ENCODE measurements at regions of chr7 and their contacts with region 1.

Region 1: DNA sequence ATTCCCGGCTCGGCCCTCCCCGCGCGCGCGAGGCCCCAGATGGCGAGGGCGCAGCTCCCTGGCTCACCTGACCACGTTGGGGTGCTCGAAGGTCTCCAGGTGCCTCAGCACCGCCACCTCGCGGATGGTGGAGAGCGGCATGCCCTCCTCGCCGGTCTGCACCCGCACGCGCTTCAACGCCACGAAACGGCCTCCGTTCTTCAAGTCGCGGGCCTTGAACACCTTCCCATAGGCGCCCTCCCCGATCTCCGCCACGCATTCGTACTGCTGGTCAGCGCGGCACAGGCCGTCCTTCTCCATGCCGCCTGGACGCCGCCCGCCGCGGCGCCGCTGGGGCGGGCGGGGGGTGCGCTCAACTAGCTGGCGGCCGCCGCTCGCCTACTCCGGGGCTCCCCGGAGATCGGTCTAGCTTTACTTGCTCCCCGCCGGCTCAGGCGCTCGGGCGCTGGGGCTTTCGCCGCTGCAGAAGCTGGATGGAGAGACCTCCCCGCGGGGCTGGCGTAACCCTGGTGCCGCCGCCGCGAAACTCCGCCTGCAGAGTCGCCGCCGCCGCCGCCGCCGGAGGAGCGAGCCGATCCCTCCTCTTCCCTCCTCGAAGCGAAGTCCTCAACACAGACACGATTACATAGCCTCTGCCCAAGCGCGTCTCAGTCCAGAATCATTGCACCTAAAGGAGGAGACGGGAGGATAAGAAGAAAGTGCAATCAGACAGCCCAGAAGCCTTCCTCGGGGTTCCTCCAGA is 3.2 kb downstream of the CDK6 start:
- DNase-seq: peak; percentile 91
- H3K4me3 Mint-ChIP-seq: peak overlapping the region; percentile 79
- H3K27ac Mint-ChIP-seq: peak overlapping the region; percentile 92
- H3K4me1 Mint-ChIP-seq: peaks cover 45% of the 10 kb centered on the region
- H3K27me3 Mint-ChIP-seq: peaks cover 13% of the 10 kb centered on the region

Region 2: GRCh38 chr7:92609921-92610518 is 223.2 kb before region 1 on chr7:
- CTCF ChIA-PET with region 1: interaction called, 25 read pairs
- POLR2A ChIA-PET with region 1: no interaction called
- DNase-seq: no peak
- H3K4me3 Mint-ChIP-seq: no peak overlapping the region
- H3K27ac Mint-ChIP-seq: peak overlapping the region; percentile 54
- H3K4me1 Mint-ChIP-seq: peaks cover 26% of the 10 kb centered on the region
- H3K27me3 Mint-ChIP-seq: no peaks in the 10 kb centered on the region

Region 3: DNA sequence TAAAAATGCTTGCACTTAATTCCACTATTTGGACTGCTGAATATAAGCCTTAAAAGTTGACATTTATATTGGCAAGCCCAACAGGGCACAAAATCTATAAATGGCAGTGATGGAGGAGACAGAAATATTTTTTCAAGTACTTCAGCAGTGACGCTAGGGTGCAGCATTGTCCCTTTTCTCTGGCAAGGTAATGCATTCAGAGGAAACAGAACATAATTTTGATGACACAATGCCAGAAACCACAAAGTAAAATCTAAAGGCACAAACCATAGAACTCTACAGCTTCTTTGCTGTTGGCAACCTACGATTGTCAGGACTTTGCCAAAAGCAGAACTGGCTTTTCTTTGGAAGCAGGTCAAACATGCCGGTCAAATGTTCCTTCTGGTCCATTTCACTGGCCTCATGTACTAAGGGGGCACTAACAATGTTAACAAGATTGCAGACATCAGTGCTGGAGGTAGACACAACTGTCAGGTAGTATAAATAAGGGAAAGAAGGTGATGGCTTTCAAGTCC is 212.1 kb before region 1 on chr7:
- CTCF ChIA-PET with region 1: interaction called, 25 read pairs
- POLR2A ChIA-PET with region 1: interaction called, 5 read pairs
- DNase-seq: peak; percentile 89
- H3K4me3 Mint-ChIP-seq: peak overlapping the region; percentile 25
- H3K27ac Mint-ChIP-seq: peak overlapping the region; percentile 85
- H3K4me1 Mint-ChIP-seq: peaks cover 51% of the 10 kb centered on the region
- H3K27me3 Mint-ChIP-seq: no peaks in the 10 kb centered on the region

Region 4: DNA sequence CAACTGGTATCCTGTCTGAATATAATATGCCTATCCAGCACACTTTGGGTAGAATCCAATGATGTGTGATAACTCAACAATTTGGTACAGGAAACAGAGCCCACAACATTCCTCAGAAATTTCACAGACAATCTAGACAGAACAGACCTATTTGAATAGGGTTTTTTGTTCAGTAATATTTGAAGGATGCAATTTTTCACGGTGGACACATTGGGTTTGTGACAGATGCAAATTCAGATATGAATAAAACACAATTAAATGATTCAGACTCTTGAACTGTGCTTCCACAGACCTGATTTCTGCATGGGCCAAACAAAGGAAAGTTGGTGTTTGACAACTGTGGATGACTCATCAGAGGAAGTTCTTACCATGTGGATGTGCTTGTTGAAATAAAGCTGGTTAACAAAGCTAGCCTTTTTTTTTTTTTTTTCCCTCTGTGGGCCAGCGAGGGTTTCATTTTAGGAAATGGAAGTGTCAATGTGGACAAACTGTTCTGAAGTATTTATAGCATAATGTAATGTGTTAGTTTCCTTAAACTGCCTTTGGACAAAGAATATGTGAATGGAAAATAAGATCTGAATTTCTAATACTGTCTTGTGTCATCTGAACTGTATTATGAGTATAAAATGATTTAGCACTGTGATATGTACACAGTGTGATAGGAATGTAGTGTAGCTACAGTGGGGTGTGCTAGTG is 199.8 kb before region 1 on chr7:
- CTCF ChIA-PET with region 1: interaction called, 15 read pairs
- POLR2A ChIA-PET with region 1: no interaction called
- DNase-seq: peak; percentile 33
- H3K4me3 Mint-ChIP-seq: peak overlapping the region; percentile 14
- H3K27ac Mint-ChIP-seq: peak overlapping the region; percentile 73
- H3K4me1 Mint-ChIP-seq: peaks cover 53% of the 10 kb centered on the region
- H3K27me3 Mint-ChIP-seq: no peaks in the 10 kb centered on the region

Region 5: DNA sequence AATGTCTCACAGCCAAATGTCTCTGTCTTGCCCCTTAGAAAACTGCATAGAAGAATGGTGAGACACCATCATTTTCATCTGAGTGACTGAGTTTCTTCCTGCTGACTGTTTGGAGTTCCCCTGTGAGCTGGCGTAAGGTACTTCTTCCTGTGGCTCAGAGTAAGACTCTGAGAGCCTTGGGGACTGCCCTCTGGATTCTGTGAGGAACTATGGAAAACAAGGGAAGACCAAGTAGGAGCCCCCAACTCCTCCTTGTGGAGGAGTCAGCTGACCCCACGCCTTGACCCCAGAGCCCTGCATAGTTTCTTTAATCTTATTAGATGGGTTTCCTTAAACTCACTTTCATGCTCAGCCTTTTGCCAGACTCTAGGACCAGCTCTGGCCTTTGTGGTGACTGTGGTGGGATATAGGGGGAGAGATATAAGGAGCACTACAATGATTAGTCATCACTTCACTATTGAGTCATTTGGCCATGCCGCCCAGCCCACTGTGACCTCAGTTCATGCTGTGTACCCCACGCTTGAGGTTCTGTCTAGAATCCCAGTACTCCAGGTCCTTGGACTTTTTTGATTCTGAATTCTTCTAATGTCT is 191.2 kb before region 1 on chr7:
- CTCF ChIA-PET with region 1: interaction called, 10 read pairs
- POLR2A ChIA-PET with region 1: no interaction called
- DNase-seq: peak; percentile 47
- H3K4me3 Mint-ChIP-seq: peak overlapping the region; percentile 26
- H3K27ac Mint-ChIP-seq: peak overlapping the region; percentile 85
- H3K4me1 Mint-ChIP-seq: peaks cover 83% of the 10 kb centered on the region
- H3K27me3 Mint-ChIP-seq: no peaks in the 10 kb centered on the region

Region 6: DNA sequence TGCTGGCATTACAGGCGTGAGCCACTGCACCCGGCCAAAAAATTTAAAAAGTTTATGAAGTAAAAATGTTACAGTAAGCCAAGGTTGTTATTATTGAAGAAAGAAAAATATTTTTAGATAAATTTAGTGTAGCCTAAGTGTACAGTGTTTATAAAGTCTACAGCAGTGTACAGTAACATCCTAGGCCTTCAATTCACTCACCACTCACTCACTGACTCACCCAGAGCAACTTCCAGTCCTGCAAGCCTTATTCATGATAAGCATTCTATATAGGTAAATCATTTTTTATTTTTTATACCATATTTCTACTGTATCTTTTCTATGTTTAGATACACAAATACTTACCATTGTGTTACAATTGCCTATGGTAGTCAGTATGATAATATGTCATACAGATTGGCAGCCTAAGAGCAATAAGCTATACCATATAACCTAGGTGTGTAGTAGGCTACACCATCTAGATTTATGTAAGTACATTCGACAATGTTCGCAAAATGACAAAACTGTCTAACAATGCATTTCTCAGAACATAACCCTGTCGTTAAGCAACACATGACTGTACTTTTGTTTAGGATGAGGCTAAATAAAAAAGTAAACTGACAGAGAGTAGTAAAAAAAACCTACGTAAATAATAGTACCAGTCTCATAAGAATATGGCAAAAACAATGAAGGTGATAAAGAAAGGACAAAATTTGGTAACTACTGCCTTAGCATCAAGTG is 165.2 kb before region 1 on chr7:
- CTCF ChIA-PET with region 1: interaction called, 10 read pairs
- POLR2A ChIA-PET with region 1: no interaction called
- DNase-seq: no peak
- H3K4me3 Mint-ChIP-seq: no peak overlapping the region
- H3K27ac Mint-ChIP-seq: no peak overlapping the region
- H3K4me1 Mint-ChIP-seq: peaks cover 53% of the 10 kb centered on the region
- H3K27me3 Mint-ChIP-seq: no peaks in the 10 kb centered on the region

Region 7: DNA sequence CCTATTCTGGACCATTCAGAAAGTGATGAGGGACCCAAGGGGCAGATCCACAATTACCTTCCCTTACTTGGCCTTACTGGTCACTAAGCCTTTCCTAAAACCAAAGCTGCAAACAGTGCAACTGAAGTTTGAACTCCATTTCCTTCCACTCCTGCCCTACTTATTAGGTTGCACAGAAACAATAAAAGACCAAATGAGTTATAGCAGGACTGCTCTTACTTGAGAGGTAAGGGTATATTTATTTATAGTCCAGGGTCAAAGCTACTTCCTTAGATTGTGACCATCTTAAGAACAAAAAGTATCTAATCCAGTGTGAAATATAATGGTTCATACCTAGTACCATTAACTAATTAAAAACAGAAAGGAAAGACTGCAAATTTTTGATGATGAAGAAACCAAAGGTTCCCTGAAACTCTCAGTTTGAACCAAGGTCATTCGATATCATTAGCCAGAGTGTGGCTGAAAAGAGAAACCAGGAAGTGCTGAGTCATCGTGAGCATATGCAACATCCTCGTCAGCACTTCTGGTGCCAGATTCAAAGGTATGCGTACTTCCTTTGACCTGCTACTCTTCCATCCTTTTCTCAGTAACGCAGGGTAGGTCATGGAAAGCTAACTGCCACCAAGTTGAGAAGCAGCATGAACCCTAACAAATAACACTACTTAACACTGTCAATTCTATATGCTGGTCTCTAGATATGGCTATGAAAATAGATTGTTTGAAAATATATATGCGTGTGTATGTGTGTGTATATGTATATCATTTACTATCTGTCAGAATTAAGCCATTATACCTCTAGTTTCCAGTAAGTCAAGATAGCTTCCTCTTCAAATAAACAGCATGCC is 23.6 kb before region 1 on chr7:
- CTCF ChIA-PET with region 1: interaction called, 78 read pairs
- POLR2A ChIA-PET with region 1: no interaction called
- DNase-seq: peak; percentile 70
- H3K4me3 Mint-ChIP-seq: peak overlapping the region; percentile 40
- H3K27ac Mint-ChIP-seq: peak overlapping the region; percentile 87
- H3K4me1 Mint-ChIP-seq: peaks cover 69% of the 10 kb centered on the region
- H3K27me3 Mint-ChIP-seq: no peaks in the 10 kb centered on the region

Measured in activated CD4-positive, alpha-beta T cell treated with anti-CD3 and anti-CD28 coated beads, Interleukin-2, amount 10 ng/mL, durations not matched to agents 7 days and 5 days (primary cell).